ENCODE measurements at regions of chr14 and their contacts with region 1.

Region 1: GRCh38 chr14:100375963-100376735 is 53.0 kb downstream of the SLC25A47 start:
- DNase-seq: peak; percentile 81 to 97
- H3K4me3 ChIP-seq: peak within 1 kb of the TSS; percentile 64 to 76
- H3K27ac ChIP-seq: peak within 1 kb of the TSS; percentile 87 to 97
- H3K4me1 ChIP-seq: peaks cover 3 to 11% of the 10 kb centered on the region in 2 donors
- H3K27me3 ChIP-seq: no peaks in the 10 kb centered on the region
- CTCF ChIP-seq: no peak

Region 2: DNA sequence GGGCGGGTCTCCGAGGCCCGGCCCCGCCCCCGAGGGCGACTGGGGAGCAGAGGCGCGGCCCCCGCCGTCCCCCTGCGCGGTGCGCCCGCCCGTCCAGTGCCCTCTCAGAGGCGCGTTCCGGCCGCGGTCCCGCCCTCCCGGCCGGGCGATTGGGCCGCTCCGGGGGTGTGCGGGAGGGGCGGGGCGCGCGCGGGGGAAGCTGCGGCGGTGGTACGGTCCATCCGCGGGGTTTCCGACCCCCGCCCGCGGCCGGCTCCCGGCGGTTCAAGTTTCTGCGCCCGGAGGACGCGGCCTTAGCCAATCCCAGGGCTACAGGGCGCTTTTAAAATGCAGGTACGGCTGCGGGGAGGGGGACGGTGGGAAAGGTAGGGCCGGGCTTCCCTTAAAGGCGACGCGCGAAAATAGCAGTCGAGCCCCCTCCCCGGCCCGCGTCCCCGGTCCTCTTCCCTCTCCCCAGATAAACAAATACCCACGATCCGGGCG is 771.8 kb before region 1 on chr14:
- intact Hi-C with region 1: loop called (anchors 10 kb)
- DNase-seq: peak; percentile 81 to 96
- H3K4me3 ChIP-seq: peak overlapping the region; percentile 78 to 81
- H3K27ac ChIP-seq: peak overlapping the region; percentile 77 to 81
- H3K4me1 ChIP-seq: peaks cover 4 to 8% of the 10 kb centered on the region in 2 donors
- H3K27me3 ChIP-seq: no peaks in the 10 kb centered on the region
- CTCF ChIP-seq: no peak

Region 3: DNA sequence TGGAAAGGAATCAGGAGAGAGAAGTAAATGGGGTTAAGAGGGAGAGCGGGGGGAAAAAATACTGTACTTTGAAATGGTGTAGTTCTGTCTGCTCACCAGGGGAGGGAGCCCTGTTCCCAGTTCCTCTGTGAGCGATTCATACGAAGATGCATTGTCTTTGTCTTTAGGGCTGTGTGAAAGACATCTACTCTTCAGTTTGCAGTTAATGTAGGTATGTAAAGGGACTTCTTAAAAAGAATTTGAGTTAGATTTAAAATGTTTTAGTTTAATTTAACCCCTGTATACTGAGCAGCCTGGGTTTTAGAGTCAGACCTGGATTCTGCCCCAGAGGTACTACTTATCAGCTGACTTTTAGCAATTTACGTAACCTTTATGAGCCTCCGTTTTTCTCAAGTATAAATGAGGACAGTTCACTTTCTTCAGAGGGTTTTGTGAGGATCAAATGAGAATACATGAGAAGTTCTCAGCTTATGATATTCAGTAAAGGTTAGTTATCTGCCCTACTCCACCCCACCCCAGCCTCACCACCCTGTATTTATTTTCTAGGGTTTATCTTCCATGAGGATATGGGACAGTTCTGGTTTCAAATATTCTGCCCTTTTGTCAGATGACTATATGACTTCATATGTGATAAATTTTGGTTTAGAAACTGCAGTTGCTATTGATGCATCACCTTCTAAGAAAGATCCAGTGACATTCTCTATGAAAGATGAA is 393.5 kb before region 1 on chr14:
- intact Hi-C with region 1: loop called (anchors 5 kb)
- DNase-seq: peak in 1 of 2 donors; percentile 69
- H3K4me3 ChIP-seq: no peak overlapping the region
- H3K27ac ChIP-seq: no peak overlapping the region
- H3K4me1 ChIP-seq: no peaks in the 10 kb centered on the region
- H3K27me3 ChIP-seq: no peaks in the 10 kb centered on the region
- CTCF ChIP-seq: peak; percentile 71 to 86 (median 85)

Region 4: GRCh38 chr14:100239840-100240724 is 136.1 kb before region 1 on chr14:
- intact Hi-C with region 1: loop called (anchors 1 kb)
- DNase-seq: peak; percentile 65 to 94
- H3K4me3 ChIP-seq: peak overlapping the region; percentile 83 to 100
- H3K27ac ChIP-seq: peak overlapping the region; percentile 91 to 93
- H3K4me1 ChIP-seq: peaks cover 9 to 32% of the 10 kb centered on the region in 2 donors
- H3K27me3 ChIP-seq: no peaks in the 10 kb centered on the region
- CTCF ChIP-seq: peak; percentile 51 to 79 (median 65)

Region 5: GRCh38 chr14:100306420-100307219 is 69.5 kb before region 1 on chr14 and contains the start of gene SLC25A29:
- intact Hi-C with region 1: loop called (anchors 1 kb)
- DNase-seq: peak; percentile 54 to 95
- H3K4me3 ChIP-seq: peak within 1 kb of the TSS; percentile 90 to 95
- H3K27ac ChIP-seq: peak within 1 kb of the TSS; percentile 74 to 83
- H3K4me1 ChIP-seq: peaks cover 3 to 12% of the 10 kb centered on the region in 2 donors
- H3K27me3 ChIP-seq: no peaks in the 10 kb centered on the region
- CTCF ChIP-seq: no peak
- total RNA-seq, gene SLC25A29: 193 TPM

Region 6: DNA sequence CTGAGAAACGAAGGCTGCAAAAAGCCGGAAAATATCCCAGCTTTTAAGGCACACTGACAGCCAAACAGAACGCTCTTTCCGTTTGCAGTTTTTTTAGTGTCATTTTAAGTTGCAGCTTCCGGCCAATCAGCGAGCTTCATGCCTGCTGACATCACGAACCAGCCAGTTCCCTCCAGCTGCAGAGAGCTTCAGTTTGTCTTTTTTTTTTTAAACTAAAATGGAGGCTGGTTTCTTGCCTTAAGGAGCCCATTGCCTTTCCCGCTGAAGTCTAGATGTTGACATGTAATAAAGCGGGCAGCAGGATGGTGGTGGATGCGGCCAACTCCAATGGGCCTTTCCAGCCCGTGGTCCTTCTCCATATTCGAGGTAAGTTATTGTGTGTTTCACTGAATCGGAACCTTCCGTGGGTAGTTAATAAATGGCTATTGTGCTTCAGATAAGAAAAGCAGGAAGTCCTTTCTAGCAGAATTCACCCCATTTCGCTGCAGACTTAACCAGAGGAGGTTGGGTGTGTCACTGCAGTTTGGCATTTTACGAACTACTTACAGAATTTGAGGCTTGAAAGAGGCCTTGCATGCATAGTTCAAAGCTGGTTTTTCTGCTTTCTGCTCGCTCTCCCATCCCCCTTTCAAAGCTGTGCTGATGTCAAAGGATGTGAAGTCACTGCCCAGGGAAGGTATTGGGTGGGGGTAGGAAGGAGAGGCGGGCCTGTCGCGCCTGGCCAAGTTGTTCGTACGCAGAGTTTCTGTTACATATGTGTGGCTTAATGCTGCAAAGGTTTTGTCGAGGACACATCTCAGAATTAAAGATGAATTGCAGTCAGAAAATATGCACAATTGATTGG is 1433.7 kb after region 1 on chr14:
- intact Hi-C with region 1: loop called (anchors 5 kb)
- DNase-seq: peak; percentile 72 to 94
- H3K4me3 ChIP-seq: peak overlapping the region; percentile 73 to 90
- H3K27ac ChIP-seq: peak overlapping the region; percentile 97 to 98
- H3K4me1 ChIP-seq: peaks cover 6 to 27% of the 10 kb centered on the region in 2 donors
- H3K27me3 ChIP-seq: no peaks in the 10 kb centered on the region
- CTCF ChIP-seq: no peak

Region 7: DNA sequence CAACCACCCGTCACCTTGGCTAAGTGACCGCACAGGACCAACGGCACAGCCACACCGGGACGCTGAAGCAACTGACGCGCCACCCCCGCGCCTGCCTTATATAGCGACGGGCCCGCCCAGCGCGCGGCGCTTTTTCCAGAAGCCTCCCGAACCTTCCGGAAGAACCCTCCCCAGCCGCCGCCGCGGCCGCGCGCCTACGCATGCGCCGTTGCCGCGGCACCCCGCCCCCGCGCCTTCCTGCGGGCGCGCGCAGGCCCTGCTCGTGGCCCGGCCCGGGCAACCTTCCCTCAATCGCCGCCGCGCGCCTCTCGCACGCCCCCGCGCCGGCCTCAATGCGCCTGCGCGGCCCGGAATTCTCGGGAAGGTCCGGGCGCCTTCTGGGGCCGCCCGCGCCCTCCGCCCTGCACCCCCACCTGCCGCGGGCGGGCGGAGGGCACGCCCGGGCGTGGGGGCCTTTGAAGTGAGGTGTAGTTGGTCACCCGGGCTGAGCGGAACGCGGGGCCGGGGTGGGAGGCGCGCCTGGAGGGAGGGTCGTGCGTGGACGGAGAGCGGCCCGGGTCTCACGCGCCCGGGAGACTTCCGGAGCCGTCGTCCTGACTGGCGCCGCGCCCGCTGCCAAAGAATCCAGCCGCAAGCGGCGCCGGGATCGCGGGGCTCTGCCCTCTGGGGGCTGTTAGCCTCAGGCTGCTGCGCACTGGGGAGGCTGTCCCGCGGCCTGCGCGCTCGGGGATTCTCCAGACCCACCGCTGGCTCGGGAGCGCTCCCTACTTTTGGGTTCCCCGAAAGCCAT is 1711.0 kb after region 1 on chr14 and contains the start of gene HSP90AA1:
- intact Hi-C with region 1: loop called (anchors 10 kb)
- DNase-seq: peak; percentile 75 to 96
- H3K4me3 ChIP-seq: peak within 1 kb of the TSS; percentile 89 to 97
- H3K27ac ChIP-seq: peak within 1 kb of the TSS; percentile 98 to 100
- H3K4me1 ChIP-seq: peaks cover 13 to 37% of the 10 kb centered on the region in 2 donors
- H3K27me3 ChIP-seq: no peaks in the 10 kb centered on the region
- CTCF ChIP-seq: peak in 2 of 3 experiments; percentile 19 to 29
- total RNA-seq, gene HSP90AA1: 120 TPM

Measured in ascending aorta (tissue), 2 donors.